Motor neuron (in vitro differentiated cells): ENCODE measurements at regions of chr12 and their contacts with region 1.

Region 1: GRCh38 chr12:51886021-51886322 is 1.9 kb upstream of the ANKRD33 start:
- ATAC-seq: peak; percentile 45 to 95 (median 90)
- H3K4me3 ChIP-seq: no peak overlapping the region
- H3K27ac ChIP-seq: no peak overlapping the region
- H3K4me1 ChIP-seq: peaks cover 5 to 11% of the 10 kb centered on the region in 2 donors

Region 2: DNA sequence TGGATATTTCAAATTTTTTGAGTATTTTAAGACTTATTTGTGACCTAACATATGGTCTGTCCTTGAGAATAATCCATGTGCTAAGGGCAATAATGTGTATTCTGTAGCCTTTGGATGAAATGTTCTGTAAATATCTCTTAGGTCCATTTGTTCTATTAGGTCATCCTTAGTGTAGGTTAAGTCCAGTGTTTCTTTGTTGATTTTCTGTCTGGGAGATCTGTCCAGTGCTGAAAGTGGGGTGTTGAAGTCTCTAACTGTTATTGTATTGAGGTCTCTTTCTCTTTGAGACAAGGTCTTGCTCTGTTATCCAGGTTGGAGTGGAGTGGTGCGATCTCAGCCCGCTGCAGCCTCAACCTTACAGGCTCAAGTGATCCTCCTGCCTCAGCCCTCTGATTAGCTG is 145.5 kb before region 1 on chr12:
- in situ Hi-C with region 1: no loop called
- ATAC-seq: no peak
- H3K4me3 ChIP-seq: no peak overlapping the region
- H3K27ac ChIP-seq: no peak overlapping the region
- H3K4me1 ChIP-seq: no peaks in the 10 kb centered on the region

Region 3: GRCh38 chr12:51752234-51752889 is 133.6 kb before region 1 on chr12:
- in situ Hi-C with region 1: loop called in 1 of 9 experiments (anchors 25 kb)
- ATAC-seq: peak; percentile 84 to 100 (median 94)
- H3K4me3 ChIP-seq: no peak overlapping the region
- H3K27ac ChIP-seq: no peak overlapping the region
- H3K4me1 ChIP-seq: no peaks in the 10 kb centered on the region

Region 4: GRCh38 chr12:51980051-51980808 is 94.3 kb after region 1 on chr12:
- in situ Hi-C with region 1: loop called in 1 of 9 experiments (anchors 25 kb)
- ATAC-seq: peak; percentile 73 to 99 (median 86)
- H3K4me3 ChIP-seq: no peak overlapping the region
- H3K27ac ChIP-seq: peak overlapping the region in 1 of 2 donors; percentile 31
- H3K4me1 ChIP-seq: no peaks in the 10 kb centered on the region

Region 5: DNA sequence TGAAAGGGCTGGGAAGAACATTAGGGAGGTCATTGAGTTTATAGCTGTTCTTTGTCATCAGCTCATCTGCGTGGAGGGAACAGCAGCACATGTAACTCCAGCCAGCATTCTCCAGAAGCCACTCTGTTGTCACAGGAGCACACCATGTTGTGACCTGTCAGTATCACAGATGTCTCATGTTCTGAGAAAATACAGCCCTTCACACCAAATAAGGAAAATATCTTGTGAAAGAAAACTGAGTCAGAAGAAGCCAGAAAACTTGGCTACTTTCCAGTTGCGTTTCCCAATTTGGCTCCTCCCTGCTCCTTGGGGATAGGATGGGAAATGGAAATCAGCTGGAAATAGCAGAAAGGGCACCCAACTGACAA is 530.4 kb after region 1 on chr12:
- in situ Hi-C with region 1: no loop called
- ATAC-seq: peak in 2 of 8 experiments; percentile 66 to 81
- H3K4me3 ChIP-seq: no peak overlapping the region
- H3K27ac ChIP-seq: no peak overlapping the region
- H3K4me1 ChIP-seq: no peaks in the 10 kb centered on the region